Mammary epithelial cell (primary cell): ENCODE measurements at regions of chr17 and their contacts with region 1.

Region 1: DNA sequence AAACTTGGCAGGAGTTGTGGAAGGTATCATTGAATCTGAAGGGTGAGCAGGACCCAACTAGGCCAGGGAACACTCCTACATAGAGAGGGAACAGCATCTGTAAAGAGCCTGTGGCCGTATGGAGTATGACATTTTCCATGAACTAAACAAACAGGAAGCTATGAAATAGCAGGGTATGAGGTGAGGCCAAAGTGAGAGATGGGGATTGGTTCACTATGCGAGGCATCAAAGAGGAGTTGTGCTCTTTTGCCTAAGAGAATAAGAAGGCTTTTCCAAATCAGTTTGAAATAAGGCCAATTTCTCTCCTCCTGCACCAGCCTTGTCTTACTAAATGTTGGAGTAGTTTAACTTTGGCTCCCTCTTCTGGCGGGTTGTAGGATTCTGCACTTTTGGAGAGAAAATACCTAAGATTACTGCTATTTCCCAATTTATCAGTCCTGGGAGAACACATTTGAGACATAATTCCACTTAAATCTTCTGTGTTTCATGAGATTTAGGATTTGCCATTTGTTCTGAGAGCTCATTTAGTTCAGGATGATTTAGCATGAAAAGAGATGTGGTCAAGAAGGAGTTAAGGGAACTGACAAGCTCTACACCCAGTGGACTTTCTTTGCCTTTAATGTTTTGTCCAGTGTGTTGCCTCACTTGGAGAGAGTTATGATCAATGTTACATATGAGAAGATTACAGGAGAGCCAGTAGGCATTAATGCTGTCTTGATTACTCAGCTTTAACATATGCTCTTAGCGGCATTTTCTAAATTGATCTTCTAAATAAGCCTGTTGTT is 55.4 kb downstream of the TNRC6C start:
- DNase-seq: peak; percentile 48
- H3K4me3 ChIP-seq: no peak overlapping the region
- H3K27ac ChIP-seq: no peak overlapping the region
- H3K4me1 ChIP-seq: no peaks in the 10 kb centered on the region
- H3K27me3 ChIP-seq: no peaks in the 10 kb centered on the region
- CTCF ChIP-seq: peak; percentile 55 to 60

Region 2: DNA sequence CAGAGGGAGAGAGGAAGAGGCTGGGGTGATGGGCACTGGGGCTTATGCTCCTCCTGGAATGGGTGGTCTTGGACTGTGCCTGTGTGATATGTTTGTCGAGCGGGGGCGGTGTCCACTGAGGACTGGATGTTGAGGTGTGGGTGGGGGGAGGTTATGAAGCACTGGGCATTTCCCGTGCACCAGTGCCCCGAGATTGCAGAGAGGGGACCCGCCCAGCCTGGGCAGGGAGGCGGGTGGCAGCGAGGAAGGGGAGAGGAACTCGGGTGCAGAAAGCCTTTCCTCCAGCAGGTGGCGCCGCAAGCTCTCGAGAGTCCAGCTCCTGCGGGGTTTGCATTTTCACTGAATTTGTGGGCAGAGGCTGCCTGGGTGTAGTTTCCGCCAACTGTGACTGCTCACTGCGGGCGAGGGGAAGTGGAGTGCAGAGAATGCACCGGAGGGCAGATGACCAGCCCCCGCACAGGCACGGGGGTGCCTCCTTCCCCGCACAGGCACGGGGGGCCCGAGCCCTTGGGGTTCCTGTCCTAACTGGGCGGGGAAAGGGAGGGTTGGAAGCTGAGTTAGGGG is 682.5 kb before region 1 on chr17:
- CTCF ChIA-PET with region 1: no interaction called
- dilution Hi-C with region 1: no loop called
- in situ Hi-C with region 1: no loop called
- intact Hi-C with region 1: loop called (anchors 10 kb)
- DNase-seq: peak; percentile 74
- H3K4me3 ChIP-seq: no peak overlapping the region
- H3K27ac ChIP-seq: peak overlapping the region; percentile 36
- H3K4me1 ChIP-seq: peaks cover 50% of the 10 kb centered on the region
- H3K27me3 ChIP-seq: no peaks in the 10 kb centered on the region
- CTCF ChIP-seq: peak; percentile 72 to 95

Region 3: DNA sequence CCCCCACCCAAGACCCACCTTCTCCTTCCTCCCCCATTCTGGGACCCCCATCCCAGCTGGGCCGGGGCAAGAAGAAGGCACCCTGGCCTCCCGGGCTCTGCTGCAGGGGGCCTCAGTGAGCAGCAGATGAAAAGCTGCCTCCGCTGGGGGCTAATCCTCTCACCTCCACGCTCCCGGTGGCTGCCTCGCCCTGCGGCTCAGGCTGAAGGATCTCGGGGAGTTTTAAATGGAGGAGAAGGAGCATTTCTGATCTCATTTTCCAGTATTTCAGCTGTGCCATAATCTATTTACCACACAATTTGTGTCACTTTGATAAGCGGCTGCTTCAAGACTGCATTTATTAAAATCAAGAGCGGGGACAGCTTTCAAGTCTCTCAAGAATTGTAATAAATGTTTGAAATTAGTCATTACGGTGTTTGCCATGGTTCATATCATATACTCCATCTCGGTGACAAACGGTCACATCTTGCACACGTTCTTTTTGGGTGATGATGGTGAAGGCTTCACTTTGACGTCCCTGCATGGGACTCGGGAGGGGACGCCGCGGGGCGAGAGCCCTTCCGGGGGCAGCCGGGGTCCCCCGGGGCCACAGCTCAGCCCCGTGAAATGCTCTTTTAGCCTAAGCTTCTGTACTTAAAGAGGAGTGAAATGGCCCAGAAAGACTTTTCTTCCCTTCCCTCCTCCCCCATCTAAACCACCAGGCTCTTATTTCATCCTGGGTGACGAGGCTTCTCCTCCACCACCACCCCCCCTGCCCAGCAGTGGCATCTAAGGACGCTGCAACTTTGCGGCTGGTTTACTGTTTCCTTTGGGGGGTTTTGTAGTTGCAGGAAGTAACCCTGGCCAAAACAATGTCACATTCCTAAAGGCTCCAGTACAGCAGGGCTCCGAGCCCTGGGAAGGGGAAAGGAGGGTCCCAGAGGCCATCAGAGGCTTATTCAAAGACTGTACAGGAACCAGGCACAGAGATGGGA is 368.5 kb before region 1 on chr17:
- CTCF ChIA-PET with region 1: no interaction called
- dilution Hi-C with region 1: no loop called
- in situ Hi-C with region 1: no loop called
- intact Hi-C with region 1: loop called (anchors 5 kb)
- DNase-seq: no peak
- H3K4me3 ChIP-seq: no peak overlapping the region
- H3K27ac ChIP-seq: no peak overlapping the region
- H3K4me1 ChIP-seq: no peaks in the 10 kb centered on the region
- H3K27me3 ChIP-seq: peaks cover 3% of the 10 kb centered on the region
- CTCF ChIP-seq: no peak

Region 4: GRCh38 chr17:77717941-77718668 is 295.8 kb before region 1 on chr17:
- CTCF ChIA-PET with region 1: interaction called, 11 read pairs
- dilution Hi-C with region 1: no loop called
- in situ Hi-C with region 1: no loop called
- intact Hi-C with region 1: no loop called
- DNase-seq: no peak
- H3K4me3 ChIP-seq: no peak overlapping the region
- H3K27ac ChIP-seq: no peak overlapping the region
- H3K4me1 ChIP-seq: no peaks in the 10 kb centered on the region
- H3K27me3 ChIP-seq: no peaks in the 10 kb centered on the region
- CTCF ChIP-seq: no peak

Region 5: GRCh38 chr17:77772461-77772897 is 241.4 kb before region 1 on chr17:
- CTCF ChIA-PET with region 1: no interaction called
- dilution Hi-C with region 1: no loop called
- in situ Hi-C with region 1: no loop called
- intact Hi-C with region 1: loop called (anchors 1 kb)
- DNase-seq: no peak
- H3K4me3 ChIP-seq: no peak overlapping the region
- H3K27ac ChIP-seq: no peak overlapping the region
- H3K4me1 ChIP-seq: no peaks in the 10 kb centered on the region
- H3K27me3 ChIP-seq: no peaks in the 10 kb centered on the region
- CTCF ChIP-seq: peak; percentile 40 to 73

Region 6: DNA sequence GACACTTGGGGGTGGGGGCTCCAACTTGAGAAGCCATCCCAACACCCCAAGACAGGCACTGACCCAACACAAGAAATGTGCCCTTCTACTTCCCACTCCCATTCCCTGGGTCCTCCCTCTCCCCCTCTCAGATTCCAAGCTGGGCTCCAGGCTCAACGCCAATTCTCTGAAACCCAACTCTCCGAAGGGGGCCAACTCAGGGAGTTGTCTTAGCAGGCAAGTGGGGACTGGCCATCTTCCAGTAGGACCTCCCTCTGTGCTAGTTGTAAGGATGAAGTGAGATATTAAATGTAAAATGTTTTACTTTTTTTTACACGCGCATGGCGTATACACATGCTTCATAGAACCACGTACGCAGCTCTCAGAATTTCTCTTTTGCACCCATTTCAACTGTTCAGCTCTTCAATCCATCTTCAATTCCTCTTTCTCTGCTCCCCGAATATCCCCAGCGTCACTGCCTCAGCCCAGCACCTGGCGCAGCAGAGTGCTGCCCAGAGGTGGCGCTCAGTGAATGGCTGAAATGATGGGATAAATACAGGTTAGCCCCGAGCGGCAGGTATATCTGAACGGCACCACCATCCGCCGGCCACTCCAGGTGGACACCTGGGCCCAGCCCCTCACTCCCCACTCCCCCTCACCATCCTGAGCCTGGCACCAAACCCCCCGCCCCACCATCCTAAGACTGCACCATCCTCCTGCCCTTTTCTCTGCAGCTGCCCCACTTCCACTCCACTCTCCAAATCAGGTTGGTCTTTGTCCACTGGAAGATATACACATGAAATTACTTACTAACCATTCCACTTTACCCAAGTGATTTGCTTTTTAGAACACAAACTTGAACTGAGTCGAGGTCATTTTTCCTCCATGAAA is 99.3 kb before region 1 on chr17:
- CTCF ChIA-PET with region 1: no interaction called
- dilution Hi-C with region 1: no loop called
- in situ Hi-C with region 1: no loop called
- intact Hi-C with region 1: loop called (anchors 1 kb)
- DNase-seq: no peak
- H3K4me3 ChIP-seq: no peak overlapping the region
- H3K27ac ChIP-seq: no peak overlapping the region
- H3K4me1 ChIP-seq: no peaks in the 10 kb centered on the region
- H3K27me3 ChIP-seq: no peaks in the 10 kb centered on the region
- CTCF ChIP-seq: peak; percentile 9 to 26

Region 7: GRCh38 chr17:78313735-78314648 is 300.1 kb after region 1 on chr17:
- CTCF ChIA-PET with region 1: no interaction called
- dilution Hi-C with region 1: no loop called
- in situ Hi-C with region 1: no loop called
- intact Hi-C with region 1: no loop called
- DNase-seq: peak; percentile 93
- H3K4me3 ChIP-seq: peak overlapping the region in 2 of 3 experiments; percentile 33 to 46
- H3K27ac ChIP-seq: peak overlapping the region; percentile 79
- H3K4me1 ChIP-seq: peaks cover 46% of the 10 kb centered on the region
- H3K27me3 ChIP-seq: no peaks in the 10 kb centered on the region
- CTCF ChIP-seq: no peak